CD8-positive, alpha-beta T cell (primary cell): ENCODE measurements at regions of chr15 and their contacts with region 1.

Region 1: GRCh38 chr15:90412356-90413194 is 24.5 kb downstream of the IQGAP1 start:
- DNase-seq: peak in 2 of 9 experiments; percentile 34 to 62
- ATAC-seq: peak; percentile 41
- H3K4me3 ChIP-seq: peak overlapping the region; percentile 2
- H3K4me3 Mint-ChIP-seq: peak overlapping the region; percentile 9
- H3K27ac ChIP-seq: peak overlapping the region in 1 of 2 experiments; percentile 55
- H3K27ac Mint-ChIP-seq: peak overlapping the region; percentile 24
- H3K4me1 ChIP-seq: peaks cover 47% of the 10 kb centered on the region
- H3K4me1 Mint-ChIP-seq: peaks cover 76% of the 10 kb centered on the region
- H3K27me3 ChIP-seq: no peaks in the 10 kb centered on the region
- H3K27me3 Mint-ChIP-seq: no peaks in the 10 kb centered on the region
- CTCF ChIP-seq: no peak

Region 2: GRCh38 chr15:90376789-90377188 is 35.8 kb before region 1 on chr15:
- CTCF ChIA-PET with region 1: no interaction called
- POLR2A ChIA-PET with region 1: no interaction called
- intact Hi-C with region 1: loop called in 1 of 2 experiments (anchors 5 kb)
- DNase-seq: peak; percentile 38 to 87 (median 69)
- ATAC-seq: peak; percentile 97
- H3K4me3 ChIP-seq: peak overlapping the region in 1 of 2 experiments; percentile 12
- H3K4me3 Mint-ChIP-seq: peak overlapping the region; percentile 63
- H3K27ac ChIP-seq: peak overlapping the region in 1 of 2 experiments; percentile 62
- H3K27ac Mint-ChIP-seq: peak overlapping the region; percentile 12
- H3K4me1 ChIP-seq: peaks cover 40% of the 10 kb centered on the region
- H3K4me1 Mint-ChIP-seq: peaks cover 50% of the 10 kb centered on the region
- H3K27me3 ChIP-seq: no peaks in the 10 kb centered on the region
- H3K27me3 Mint-ChIP-seq: no peaks in the 10 kb centered on the region
- CTCF ChIP-seq: no peak

Region 3: DNA sequence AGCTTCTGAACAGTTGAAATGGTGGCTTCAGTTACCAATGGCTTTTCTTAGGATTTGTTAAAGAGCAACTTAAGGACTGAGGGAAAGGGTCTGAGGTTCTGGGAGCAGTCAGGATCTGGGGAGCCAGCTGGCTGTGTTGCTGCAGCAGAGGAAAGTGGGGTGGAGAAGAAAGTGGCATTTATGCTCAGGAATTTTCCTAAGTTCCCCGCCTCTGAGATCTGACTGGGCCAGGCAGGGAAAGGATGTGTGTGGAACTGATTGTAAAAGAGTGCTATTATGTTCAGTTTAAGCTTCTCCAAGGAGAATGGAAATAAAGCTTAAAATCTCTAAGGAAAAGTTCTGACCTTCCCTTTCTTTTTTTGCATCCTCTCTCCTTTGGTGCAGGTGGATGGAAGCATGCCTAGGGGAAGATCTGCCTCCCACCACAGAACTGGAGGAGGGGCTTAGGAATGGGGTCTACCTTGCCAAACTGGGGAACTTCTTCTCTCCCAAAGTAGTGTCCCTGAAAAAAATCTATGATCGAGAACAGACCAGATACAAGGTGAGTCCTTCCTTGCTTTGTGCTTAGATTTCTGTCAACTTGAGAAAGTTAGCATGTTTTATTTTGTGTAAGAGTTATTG is 13.3 kb after region 1 on chr15:
- CTCF ChIA-PET with region 1: interaction called, 4 read pairs
- POLR2A ChIA-PET with region 1: no interaction called
- intact Hi-C with region 1: loop called in 1 of 2 experiments (anchors 2 kb)
- DNase-seq: no peak
- ATAC-seq: no peak
- H3K4me3 ChIP-seq: no peak overlapping the region
- H3K4me3 Mint-ChIP-seq: no peak overlapping the region
- H3K27ac ChIP-seq: no peak overlapping the region
- H3K27ac Mint-ChIP-seq: no peak overlapping the region
- H3K4me1 ChIP-seq: peaks cover 6% of the 10 kb centered on the region
- H3K4me1 Mint-ChIP-seq: peaks cover 35% of the 10 kb centered on the region
- H3K27me3 ChIP-seq: no peaks in the 10 kb centered on the region
- H3K27me3 Mint-ChIP-seq: no peaks in the 10 kb centered on the region
- CTCF ChIP-seq: no peak